ENCODE measurements at regions of chr22 and their contacts with region 1.

Region 1: DNA sequence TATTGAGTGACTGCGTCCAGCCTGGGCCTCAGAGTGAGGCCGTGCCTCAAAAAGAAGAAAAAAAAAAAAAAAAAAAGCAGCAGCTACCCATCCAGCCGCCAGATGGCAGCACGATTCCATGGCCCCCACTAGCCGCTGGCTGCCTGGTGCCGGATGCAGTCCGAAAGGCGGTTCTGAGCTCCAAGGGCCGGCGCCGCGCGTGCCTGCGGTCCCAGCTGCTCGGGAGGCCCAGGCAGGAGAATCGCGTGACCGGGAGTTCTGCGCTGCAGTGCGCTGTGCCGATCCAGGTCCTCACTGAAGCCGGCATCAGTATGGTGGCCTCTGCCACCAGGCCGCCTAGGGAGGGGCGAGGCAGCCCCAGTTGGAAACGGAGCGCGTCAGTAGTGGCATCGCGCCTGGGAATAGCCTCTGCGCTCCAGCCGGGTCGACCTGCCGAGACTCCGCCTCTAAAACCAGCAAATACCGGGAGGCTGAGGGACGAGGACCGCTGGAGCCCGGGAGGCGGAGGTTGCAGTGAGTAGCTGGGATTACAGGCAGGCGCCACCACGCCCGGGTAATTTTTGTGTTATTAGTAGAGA is 19.3 kb downstream of the SCARF2 start:
- DNase-seq: peak; percentile 71
- H3K4me3 ChIP-seq: peak overlapping the region; percentile 28
- H3K27ac ChIP-seq: no peak overlapping the region
- H3K4me1 ChIP-seq: peaks cover 3% of the 10 kb centered on the region
- CTCF ChIP-seq: peak; percentile 84

Region 2: DNA sequence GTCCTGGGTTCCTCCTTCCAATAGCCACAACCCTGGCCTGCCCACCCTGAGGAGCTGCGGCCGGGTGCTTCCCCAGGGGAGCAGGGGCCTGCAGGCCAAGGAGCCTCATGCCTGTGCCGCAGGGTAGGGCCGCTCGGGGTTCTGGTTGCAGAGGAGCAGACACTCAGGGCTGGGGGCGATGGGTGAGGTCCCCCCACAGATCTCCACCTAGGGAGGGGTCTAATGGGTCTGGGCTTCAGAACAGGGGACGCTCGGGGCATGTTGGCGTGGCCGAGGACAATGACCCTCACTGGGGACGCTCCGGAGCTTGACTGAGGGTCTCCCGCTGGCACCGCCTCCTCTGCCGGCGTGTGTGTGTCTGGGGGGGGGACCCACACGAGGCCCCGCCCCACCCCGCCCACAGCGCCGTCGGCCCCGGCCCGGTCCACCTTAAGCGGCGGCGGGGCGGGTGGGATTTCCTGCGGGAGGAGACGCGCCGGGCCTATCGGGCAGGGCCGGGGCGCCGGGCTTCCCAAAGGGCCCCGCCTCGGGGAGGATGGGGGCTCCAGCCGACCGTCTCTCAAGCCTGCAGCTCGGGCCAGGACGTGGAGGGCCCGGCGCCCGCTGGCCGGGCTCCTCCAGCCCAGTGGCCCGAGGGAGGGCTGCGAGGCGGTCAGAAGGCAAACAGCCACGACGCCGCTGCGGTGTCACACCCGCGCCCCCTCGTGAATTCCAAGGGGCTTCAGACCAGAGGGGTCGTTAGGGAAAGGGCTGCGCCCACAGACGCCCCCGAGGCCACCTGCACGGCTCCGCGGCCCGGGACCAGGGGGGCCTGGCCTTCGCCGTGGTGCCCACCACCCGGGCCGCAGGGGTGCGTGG is 287.3 kb before region 1 on chr22:
- CTCF ChIA-PET with region 1: no interaction called
- POLR2A ChIA-PET with region 1: no interaction called
- intact Hi-C with region 1: no loop called
- DNase-seq: no peak
- H3K4me3 ChIP-seq: peak overlapping the region; percentile 23
- H3K27ac ChIP-seq: no peak overlapping the region
- H3K4me1 ChIP-seq: peaks cover 20% of the 10 kb centered on the region
- CTCF ChIP-seq: no peak

Region 3: GRCh38 chr22:20456064-20456721 is 37.9 kb after region 1 on chr22:
- CTCF ChIA-PET with region 1: interaction called, 6 read pairs
- POLR2A ChIA-PET with region 1: interaction called, 3 read pairs
- intact Hi-C with region 1: loop called (anchors 1 kb)
- DNase-seq: peak; percentile 85
- H3K4me3 ChIP-seq: no peak overlapping the region
- H3K27ac ChIP-seq: no peak overlapping the region
- H3K4me1 ChIP-seq: peaks cover 6% of the 10 kb centered on the region
- CTCF ChIP-seq: peak; percentile 93

Region 4: DNA sequence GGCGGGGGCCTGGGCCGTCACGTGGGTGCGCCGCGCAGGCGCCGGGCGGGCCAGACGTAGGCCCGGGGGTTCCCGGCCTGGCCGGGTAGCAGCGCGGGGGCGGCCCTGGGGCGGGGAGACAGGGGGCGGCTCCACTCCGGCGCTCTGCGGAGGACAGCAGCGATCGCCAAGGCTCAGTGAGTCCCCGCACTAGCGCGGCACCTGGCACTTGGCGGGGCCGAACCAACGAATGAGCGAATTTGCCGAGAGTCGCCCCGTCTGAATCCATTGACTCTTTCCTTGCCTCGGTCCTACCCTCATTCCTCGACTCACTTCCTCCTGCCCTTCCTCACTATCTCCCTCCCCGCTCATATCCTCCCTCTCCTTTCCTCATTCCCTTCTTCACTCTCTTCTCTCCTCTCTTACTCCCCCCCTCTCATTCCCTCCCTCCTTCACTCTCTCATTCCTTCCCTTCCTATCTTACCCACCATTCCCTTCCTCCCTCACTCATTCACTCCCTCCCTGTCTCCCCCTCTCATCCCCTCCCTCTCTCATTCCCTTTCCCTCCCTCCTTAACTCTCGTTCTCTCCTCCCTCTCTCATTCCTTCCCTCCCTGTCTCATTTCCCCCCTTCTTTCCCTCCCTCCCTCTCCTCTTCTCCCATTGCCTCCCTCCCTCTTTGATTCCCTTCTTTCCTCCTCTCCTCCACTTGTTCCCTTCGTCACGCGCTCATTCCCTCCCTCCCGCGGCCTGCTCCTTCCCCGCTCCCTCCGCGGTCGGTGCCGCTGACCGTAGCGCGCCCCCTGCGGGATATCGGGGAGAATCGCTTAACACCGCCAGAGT is 77.8 kb after region 1 on chr22:
- CTCF ChIA-PET with region 1: no interaction called
- POLR2A ChIA-PET with region 1: no interaction called
- intact Hi-C with region 1: loop called (anchors 1 kb)
- DNase-seq: peak; percentile 92
- H3K4me3 ChIP-seq: peak overlapping the region; percentile 70
- H3K27ac ChIP-seq: peak overlapping the region; percentile 58
- H3K4me1 ChIP-seq: peaks cover 13% of the 10 kb centered on the region
- CTCF ChIP-seq: peak; percentile 96

Region 5: GRCh38 chr22:20571531-20572007 is 153.3 kb after region 1 on chr22:
- CTCF ChIA-PET with region 1: no interaction called
- POLR2A ChIA-PET with region 1: no interaction called
- intact Hi-C with region 1: loop called (anchors 1 kb)
- DNase-seq: peak; percentile 53
- H3K4me3 ChIP-seq: no peak overlapping the region
- H3K27ac ChIP-seq: no peak overlapping the region
- H3K4me1 ChIP-seq: no peaks in the 10 kb centered on the region
- CTCF ChIP-seq: peak; percentile 96

Measured in OCI-LY7 (cell line).